Heart right ventricle (tissue), 16 donors: ENCODE measurements at regions of chr6 and their contacts with region 1.

Region 1: GRCh38 chr6:8707956-8708772 is 272.8 kb upstream of the SLC35B3 start:
- DNase-seq: no peak
- ATAC-seq: peak in 4 of 8 donors; percentile 46 to 71 (median 56)
- H3K4me3 ChIP-seq: peak overlapping the region in 6 of 10 donors; percentile 8 to 45 (median 27)
- H3K27ac ChIP-seq: no peak overlapping the region
- H3K4me1 ChIP-seq: peaks cover 0 to 4% (median 0%) of the 10 kb centered on the region in 9 donors
- H3K27me3 ChIP-seq: no peaks in the 10 kb centered on the region
- CTCF ChIP-seq: peak in 7 of 9 donors; percentile 34 to 53 (median 38)

Region 2: GRCh38 chr6:8570256-8570920 is 137.8 kb before region 1 on chr6:
- intact Hi-C with region 1: no loop called
- DNase-seq: no peak
- ATAC-seq: no peak
- H3K4me3 ChIP-seq: no peak overlapping the region
- H3K27ac ChIP-seq: no peak overlapping the region
- H3K4me1 ChIP-seq: no peaks in the 10 kb centered on the region
- H3K27me3 ChIP-seq: no peaks in the 10 kb centered on the region
- CTCF ChIP-seq: no peak

Region 3: GRCh38 chr6:8743168-8743745 is 35.1 kb after region 1 on chr6:
- intact Hi-C with region 1: loop called in 1 of 10 experiments (anchors 1 kb)
- DNase-seq: no peak
- ATAC-seq: no peak
- H3K4me3 ChIP-seq: peak overlapping the region in 3 of 10 donors; percentile 23 to 32 (median 23)
- H3K27ac ChIP-seq: no peak overlapping the region
- H3K4me1 ChIP-seq: no peaks in the 10 kb centered on the region
- H3K27me3 ChIP-seq: no peaks in the 10 kb centered on the region
- CTCF ChIP-seq: peak in 1 of 9 donors; percentile 13

Region 4: GRCh38 chr6:8888468-8888867 is 180.3 kb after region 1 on chr6:
- intact Hi-C with region 1: loop called in 1 of 10 experiments (anchors 10 kb)
- DNase-seq: no peak
- ATAC-seq: no peak
- H3K4me3 ChIP-seq: no peak overlapping the region
- H3K27ac ChIP-seq: no peak overlapping the region
- H3K4me1 ChIP-seq: no peaks in the 10 kb centered on the region
- H3K27me3 ChIP-seq: no peaks in the 10 kb centered on the region
- CTCF ChIP-seq: peak in 7 of 9 donors; percentile 8 to 33 (median 18)

Region 5: GRCh38 chr6:9208956-9209355 is 500.8 kb after region 1 on chr6:
- intact Hi-C with region 1: no loop called
- DNase-seq: no peak
- ATAC-seq: no peak
- H3K4me3 ChIP-seq: no peak overlapping the region
- H3K27ac ChIP-seq: no peak overlapping the region
- H3K4me1 ChIP-seq: no peaks in the 10 kb centered on the region
- H3K27me3 ChIP-seq: no peaks in the 10 kb centered on the region
- CTCF ChIP-seq: no peak